ENCODE measurements at regions of chr15 and their contacts with region 1.

Region 1: DNA sequence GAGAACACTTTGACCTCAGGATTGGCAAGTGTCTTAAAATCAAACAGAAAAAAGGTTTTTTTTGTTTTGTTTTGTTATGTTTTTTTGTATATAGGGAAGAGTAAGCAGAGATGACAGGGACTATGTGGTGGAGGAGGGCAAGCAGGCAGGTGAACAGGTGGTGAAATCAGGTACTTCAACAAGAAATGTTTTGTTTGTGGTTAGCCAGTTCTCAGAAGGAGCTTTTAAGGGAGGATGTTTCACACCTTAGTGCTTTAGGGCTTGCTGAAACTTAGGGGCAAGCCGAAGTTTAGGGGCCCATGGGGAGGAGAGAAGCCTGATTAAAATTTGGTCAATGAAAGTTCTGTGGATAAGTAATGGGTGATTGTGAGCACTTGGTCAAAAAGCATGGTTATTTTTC is 370.7 kb upstream of the SLCO3A1 start:
- DNase-seq: no peak
- H3K4me3 ChIP-seq: no peak overlapping the region
- H3K27ac ChIP-seq: no peak overlapping the region
- H3K4me1 ChIP-seq: no peaks in the 10 kb centered on the region
- H3K27me3 ChIP-seq: no peaks in the 10 kb centered on the region
- CTCF ChIP-seq: no peak
- POLR2A ChIP-seq: no peak

Region 2: DNA sequence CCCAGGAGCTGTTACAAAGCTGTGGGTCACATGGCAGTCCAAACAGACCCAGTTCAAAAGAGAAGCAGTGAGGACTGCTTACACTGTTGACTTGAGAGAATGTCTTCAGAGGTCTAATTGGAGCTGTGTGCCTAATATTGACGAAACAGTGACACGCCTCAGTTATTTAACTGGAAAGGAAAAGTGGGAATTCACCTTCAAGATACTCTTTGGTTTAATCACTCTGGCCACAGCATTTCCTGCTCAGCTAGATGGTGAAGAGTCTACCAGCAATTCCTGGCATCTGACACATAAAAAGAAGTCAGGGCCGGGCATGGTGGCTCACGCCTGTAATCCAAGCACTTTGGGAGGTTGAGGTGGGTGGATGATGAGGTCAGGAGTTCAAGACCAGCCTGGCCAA is 56.4 kb before region 1 on chr15:
- intact Hi-C with region 1: loop called (anchors 10 kb)
- DNase-seq: no peak
- H3K4me3 ChIP-seq: no peak overlapping the region
- H3K27ac ChIP-seq: no peak overlapping the region
- H3K4me1 ChIP-seq: no peaks in the 10 kb centered on the region
- H3K27me3 ChIP-seq: no peaks in the 10 kb centered on the region
- CTCF ChIP-seq: no peak
- POLR2A ChIP-seq: no peak

Measured in breast epithelium (tissue), 4 donors.